Heart right ventricle (tissue), 16 donors: ENCODE measurements at regions of chr12 and their contacts with region 1.

Region 1: DNA sequence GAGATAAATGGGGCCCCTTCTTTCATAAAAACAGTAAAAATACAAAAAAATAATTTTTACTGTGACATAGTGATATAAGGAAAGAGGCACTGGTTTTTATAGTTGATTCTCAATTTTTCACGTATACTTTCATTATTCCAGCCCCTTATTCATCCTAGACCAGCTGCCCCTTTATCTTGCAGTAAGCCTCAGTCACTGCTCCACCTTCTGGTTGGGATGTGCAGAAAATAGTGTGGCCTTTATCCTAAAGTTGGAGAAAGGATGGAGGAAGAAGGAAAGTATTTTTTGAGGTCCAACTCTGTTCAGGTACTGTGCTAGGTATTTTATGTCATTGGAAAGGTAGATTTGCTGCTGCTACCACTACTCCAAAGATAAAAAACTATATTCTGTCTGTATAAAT is 172.7 kb downstream of the ANO6 start:
- DNase-seq: peak in 1 of 2 donors; percentile 49
- ATAC-seq: peak in 6 of 8 donors; percentile 47 to 77 (median 58)
- H3K4me3 ChIP-seq: no peak overlapping the region
- H3K27ac ChIP-seq: no peak overlapping the region
- H3K4me1 ChIP-seq: peaks cover 0 to 5% (median 0%) of the 10 kb centered on the region in 9 donors
- H3K27me3 ChIP-seq: no peaks in the 10 kb centered on the region
- CTCF ChIP-seq: peak; percentile 11 to 79 (median 61)

Region 2: GRCh38 chr12:45183246-45183645 is 205.3 kb before region 1 on chr12:
- intact Hi-C with region 1: loop called in 6 of 10 experiments (anchors 5 to 10 kb)
- DNase-seq: no peak
- ATAC-seq: peak in 1 of 8 donors; percentile 34
- H3K4me3 ChIP-seq: no peak overlapping the region
- H3K27ac ChIP-seq: no peak overlapping the region
- H3K4me1 ChIP-seq: peaks cover 0 to 16% (median 0%) of the 10 kb centered on the region in 9 donors
- H3K27me3 ChIP-seq: no peaks in the 10 kb centered on the region
- CTCF ChIP-seq: peak in 8 of 9 donors; percentile 16 to 67 (median 46)

Region 3: GRCh38 chr12:45425426-45425825 is 36.9 kb after region 1 on chr12:
- intact Hi-C with region 1: no loop called
- DNase-seq: no peak
- ATAC-seq: no peak
- H3K4me3 ChIP-seq: no peak overlapping the region
- H3K27ac ChIP-seq: no peak overlapping the region
- H3K4me1 ChIP-seq: peaks cover 0 to 14% (median 0%) of the 10 kb centered on the region in 9 donors
- H3K27me3 ChIP-seq: no peaks in the 10 kb centered on the region
- CTCF ChIP-seq: no peak

Region 4: DNA sequence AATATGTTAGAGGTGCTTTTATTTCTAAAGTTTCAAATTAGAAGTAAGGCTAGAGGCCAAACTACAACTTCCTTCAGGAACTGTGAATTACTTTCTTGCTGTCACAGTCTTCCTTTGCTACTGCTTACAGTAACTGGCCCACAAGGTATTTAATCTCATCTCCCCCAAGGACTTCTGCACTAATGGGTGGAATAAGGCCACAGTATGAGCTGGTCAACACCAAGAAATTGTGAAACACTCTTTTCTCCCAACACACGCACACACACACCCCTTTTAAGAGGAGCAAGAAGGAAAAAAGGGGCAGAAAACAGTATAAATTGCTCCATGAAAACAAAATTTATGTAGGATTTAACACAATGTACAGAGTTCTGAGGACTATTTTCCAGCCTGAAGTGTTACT is 556.2 kb after region 1 on chr12:
- intact Hi-C with region 1: no loop called
- DNase-seq: no peak
- ATAC-seq: no peak
- H3K4me3 ChIP-seq: no peak overlapping the region
- H3K27ac ChIP-seq: no peak overlapping the region
- H3K4me1 ChIP-seq: peaks cover 0 to 11% (median 0%) of the 10 kb centered on the region in 9 donors
- H3K27me3 ChIP-seq: no peaks in the 10 kb centered on the region
- CTCF ChIP-seq: no peak